ENCODE measurements at regions of chr20 and their contacts with region 1.

Region 1: DNA sequence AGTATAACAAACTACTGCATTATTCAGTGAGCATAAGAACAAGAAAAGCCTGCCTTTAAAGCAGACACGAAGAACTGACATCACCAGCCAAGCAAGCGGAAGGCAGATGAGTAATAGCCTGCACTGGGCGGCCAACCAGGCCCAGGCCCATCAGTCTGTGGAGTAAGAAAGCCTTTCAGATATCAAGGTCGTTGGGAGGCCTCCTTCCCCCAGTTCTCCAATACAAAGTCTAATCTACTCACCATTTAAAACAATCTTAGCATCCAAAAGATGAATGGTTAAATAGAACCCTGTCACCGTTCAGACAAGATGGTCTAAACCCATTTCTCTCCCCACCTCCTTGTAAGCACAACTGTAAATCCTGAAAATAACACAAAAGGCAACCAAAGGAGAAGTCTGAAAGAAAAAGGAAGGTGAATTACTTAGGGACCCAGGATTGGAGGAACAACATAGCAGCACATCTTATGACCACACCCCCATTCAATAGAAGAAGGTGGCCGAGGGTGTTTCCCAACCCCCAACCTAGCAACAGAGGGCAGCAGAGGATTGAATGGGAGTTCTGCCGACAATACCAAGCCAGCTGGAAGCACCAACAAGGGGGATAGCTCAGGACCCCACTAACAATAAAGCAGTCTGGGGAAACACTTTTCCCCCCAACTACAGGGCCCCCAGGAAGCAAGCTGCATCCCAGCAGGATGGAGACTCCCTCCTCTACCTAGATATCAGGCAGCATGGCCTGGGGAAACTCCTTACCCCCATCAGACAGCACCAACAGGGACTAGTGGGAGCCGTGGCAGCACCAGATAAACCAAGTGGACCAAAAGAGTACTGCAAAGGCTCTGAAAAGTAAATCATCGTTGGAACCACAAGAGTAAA is 67.9 kb downstream of the ZHX3 start:
- DNase-seq: peak; percentile 29
- H3K4me3 ChIP-seq: no peak overlapping the region
- H3K27ac ChIP-seq: peak overlapping the region; percentile 75
- H3K4me1 ChIP-seq: peaks cover 3% of the 10 kb centered on the region
- H3K27me3 ChIP-seq: no peaks in the 10 kb centered on the region
- CTCF ChIP-seq: peak in 1 of 4 experiments; percentile 12
- POLR2A ChIP-seq: no peak

Region 2: DNA sequence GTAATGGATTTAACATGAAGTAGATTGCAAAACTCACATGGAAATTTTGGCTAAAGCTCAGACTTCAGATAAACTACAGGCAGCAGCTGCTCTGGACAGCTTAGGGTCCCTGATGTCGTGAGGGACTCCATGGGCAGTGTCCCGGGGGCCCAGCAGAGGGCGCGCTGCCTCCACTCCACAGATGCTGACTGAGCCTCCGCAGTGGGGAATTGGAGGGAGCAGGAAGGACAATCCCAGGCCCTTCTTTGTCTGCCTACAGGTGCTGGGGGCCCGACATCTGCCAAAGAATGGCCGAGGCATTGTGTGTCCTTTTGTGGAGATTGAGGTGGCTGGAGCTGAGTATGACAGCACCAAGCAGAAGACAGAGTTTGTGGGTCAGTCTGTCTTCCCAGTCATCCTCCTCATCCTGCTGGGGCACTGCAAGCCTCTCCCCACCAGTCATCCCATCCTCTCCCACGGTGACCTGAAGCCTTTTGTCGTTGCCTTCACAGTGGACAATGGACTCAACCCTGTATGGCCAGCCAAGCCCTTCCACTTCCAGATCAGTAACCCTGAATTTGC is 76.4 kb before region 1 on chr20:
- intact Hi-C with region 1: loop called (anchors 5 kb)
- DNase-seq: peak; percentile 76
- H3K4me3 ChIP-seq: no peak overlapping the region
- H3K27ac ChIP-seq: peak overlapping the region; percentile 57 to 62
- H3K4me1 ChIP-seq: no peaks in the 10 kb centered on the region
- H3K27me3 ChIP-seq: no peaks in the 10 kb centered on the region
- CTCF ChIP-seq: peak; percentile 83 to 95 (median 94)
- POLR2A ChIP-seq: no peak

Region 3: DNA sequence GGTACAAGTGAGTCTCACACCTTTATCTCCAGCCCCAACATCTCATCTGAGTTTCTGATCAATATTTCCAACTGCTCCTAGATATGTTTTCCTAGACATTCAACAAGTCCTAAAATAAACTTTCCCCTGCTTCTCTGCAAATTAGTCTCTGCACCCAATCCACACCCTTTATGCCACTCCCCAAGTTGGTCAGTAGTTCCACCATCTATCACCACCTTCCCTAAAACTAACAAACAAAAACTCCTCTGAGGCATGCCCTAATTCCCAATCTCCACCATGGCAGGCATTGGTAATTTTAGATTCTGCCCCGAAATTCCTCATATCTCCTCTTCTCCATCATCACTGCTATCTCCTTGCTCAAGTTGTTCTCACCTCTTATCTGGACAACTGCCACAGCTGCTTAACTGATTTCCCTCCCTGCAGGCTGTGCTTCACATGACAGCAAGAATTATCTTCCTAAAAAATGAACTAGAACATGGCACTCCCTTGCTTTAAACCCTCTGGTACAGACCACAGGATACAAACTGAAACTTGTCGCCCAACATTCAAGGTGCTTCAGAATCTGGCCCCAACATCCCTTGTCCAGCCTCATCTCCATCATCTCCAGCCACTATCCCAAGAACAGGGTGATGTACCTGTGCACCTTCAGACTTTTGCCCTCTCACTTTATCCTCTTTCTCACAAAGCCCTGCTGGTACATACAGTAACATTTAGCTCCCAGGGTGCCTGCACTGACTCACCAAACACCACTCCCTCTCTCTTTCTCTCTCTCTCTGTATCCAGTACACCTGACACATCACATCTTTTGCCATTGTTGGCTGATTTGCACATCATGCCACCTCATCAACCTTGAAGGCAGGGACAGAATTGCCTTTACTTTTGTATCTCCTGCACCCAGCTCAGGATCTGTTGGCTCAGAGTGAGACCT is 12.4 kb after region 1 on chr20:
- intact Hi-C with region 1: loop called (anchors 1 kb)
- DNase-seq: no peak
- H3K4me3 ChIP-seq: no peak overlapping the region
- H3K27ac ChIP-seq: no peak overlapping the region
- H3K4me1 ChIP-seq: no peaks in the 10 kb centered on the region
- H3K27me3 ChIP-seq: no peaks in the 10 kb centered on the region
- CTCF ChIP-seq: no peak
- POLR2A ChIP-seq: no peak

Region 4: DNA sequence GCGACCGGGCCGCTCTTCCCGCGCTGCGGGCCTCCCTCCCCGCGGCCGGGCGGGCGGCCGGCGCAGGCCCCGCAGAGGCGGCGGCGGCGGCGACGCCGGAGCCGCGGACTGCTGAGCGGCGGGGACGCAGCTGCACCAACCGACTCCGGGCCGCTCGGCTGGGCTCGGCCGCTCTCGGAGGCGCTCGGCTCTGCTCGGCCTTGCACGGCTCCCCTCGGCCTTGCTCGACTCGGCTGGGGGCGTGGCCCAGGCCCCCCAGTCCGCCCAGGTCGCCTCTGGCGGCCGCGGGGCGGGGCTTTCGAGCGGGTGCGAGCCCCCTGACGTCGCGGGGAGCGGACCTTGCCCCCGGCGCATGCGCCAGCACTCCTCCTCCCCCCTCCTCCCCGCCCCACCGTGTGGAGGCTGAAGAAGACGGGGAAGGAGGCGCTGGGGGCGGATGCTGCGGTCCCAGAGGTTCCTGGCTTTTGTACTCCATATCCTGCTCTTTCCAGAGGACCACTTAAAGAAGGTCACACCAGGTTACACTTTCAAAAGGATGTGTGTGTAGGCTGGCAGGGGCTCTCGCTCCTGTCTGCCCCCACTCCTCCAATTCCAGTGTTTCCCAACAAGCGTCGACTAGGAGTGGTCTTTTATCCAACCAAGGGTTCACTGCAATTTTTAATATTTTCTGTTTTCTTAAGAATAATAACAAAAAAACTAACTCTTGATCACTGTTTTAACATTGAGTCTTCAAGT is 68.1 kb after region 1 on chr20 and contains the start of gene ZHX3:
- intact Hi-C with region 1: loop called (anchors 2 kb)
- DNase-seq: peak; percentile 92
- H3K4me3 ChIP-seq: peak within 1 kb of the TSS; percentile 66 to 75
- H3K27ac ChIP-seq: peak within 1 kb of the TSS; percentile 59 to 76
- H3K4me1 ChIP-seq: no peaks in the 10 kb centered on the region
- H3K27me3 ChIP-seq: no peaks in the 10 kb centered on the region
- CTCF ChIP-seq: peak in 2 of 4 experiments; percentile 4 to 7
- POLR2A ChIP-seq: peak; percentile 58
- total RNA-seq, gene ZHX3: 24.9 to 42.6 TPM

Region 5: GRCh38 chr20:41339507-41340326 is 90.1 kb after region 1 on chr20:
- intact Hi-C with region 1: loop called (anchors 5 kb)
- DNase-seq: peak; percentile 91
- H3K4me3 ChIP-seq: peak overlapping the region; percentile 26 to 28
- H3K27ac ChIP-seq: peak overlapping the region; percentile 71 to 72
- H3K4me1 ChIP-seq: peaks cover 4% of the 10 kb centered on the region
- H3K27me3 ChIP-seq: no peaks in the 10 kb centered on the region
- CTCF ChIP-seq: peak; percentile 99 to 100 (median 100)
- POLR2A ChIP-seq: no peak